MCF 10A (cell line): ENCODE measurements at regions of chr12 and their contacts with region 1.

Region 1: DNA sequence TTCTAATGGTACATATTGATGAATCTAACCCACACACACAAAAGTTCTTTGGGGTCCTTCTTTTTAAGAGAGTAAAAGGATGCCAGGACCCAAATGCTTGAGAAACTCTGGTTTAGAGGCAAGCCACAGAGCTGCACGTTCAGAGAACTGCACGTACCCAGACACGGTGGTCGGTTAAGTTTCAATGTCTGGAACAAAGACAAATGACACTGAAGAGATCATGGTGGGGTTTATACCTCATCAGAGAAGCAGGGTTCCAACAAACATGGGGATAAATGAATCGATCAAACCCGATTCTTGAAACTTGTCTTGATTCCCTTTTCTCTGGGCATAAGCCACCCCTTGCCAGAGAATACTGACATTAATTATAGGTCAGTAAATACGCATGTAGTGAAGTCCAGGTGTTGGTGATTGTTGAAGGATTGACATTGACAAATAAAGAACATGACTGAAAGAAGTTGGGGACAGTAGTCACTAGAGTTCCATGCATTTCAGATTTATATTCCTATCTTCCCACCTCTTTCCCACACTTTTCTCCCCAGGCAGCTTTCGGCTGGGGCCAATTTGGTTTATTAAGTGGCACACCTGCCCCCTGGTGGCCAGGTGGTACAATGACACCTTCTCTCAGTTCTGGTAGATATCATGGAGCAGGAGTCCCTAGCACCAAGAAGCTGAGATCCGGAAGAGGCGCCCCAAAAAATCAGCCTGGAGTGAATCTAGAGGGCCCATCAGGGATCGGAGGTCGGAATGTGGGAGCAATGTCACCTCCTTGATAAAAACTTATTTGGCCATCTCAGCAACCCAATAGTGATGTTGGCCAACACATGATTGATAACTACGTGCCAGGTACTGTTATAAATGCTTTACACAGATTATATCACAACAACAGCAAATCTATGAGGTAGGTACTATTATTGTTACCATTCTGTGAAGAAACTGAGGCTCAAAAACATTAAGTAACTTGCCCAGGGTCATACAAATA is 17.8 kb upstream of the HDAC7 start:
- DNase-seq: peak; percentile 86
- H3K4me3 Mint-ChIP-seq: no peak overlapping the region
- H3K27ac Mint-ChIP-seq: no peak overlapping the region
- H3K4me1 Mint-ChIP-seq: peaks cover 21% of the 10 kb centered on the region
- H3K27me3 Mint-ChIP-seq: no peaks in the 10 kb centered on the region
- CTCF ChIP-seq: peak; percentile 92

Region 2: DNA sequence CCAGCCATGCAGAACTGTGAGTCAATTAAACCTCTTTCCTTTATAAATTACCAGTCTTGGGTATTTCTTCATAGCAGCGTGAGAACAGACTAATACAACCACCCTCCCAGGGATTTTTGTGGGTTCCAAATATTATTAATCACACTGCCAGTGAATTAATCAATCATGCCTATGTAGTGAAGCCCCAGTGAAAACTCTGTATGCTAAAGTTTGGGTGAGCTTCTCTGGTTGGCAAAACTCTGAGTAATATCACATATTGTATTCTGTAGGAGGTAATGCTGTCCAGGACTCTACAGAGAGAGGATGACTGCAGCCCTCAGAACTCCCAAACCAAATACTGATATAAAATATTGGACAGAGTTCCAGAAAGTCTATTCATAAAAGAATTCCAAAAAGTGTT is 348.6 kb before region 1 on chr12:
- CTCF ChIA-PET with region 1: no interaction called
- POLR2A ChIA-PET with region 1: no interaction called
- intact Hi-C with region 1: no loop called
- DNase-seq: no peak
- H3K4me3 Mint-ChIP-seq: no peak overlapping the region
- H3K27ac Mint-ChIP-seq: no peak overlapping the region
- H3K4me1 Mint-ChIP-seq: no peaks in the 10 kb centered on the region
- H3K27me3 Mint-ChIP-seq: peaks cover 94% of the 10 kb centered on the region
- CTCF ChIP-seq: no peak

Region 3: GRCh38 chr12:47591361-47591791 is 246.1 kb before region 1 on chr12:
- CTCF ChIA-PET with region 1: no interaction called
- POLR2A ChIA-PET with region 1: no interaction called
- intact Hi-C with region 1: no loop called
- DNase-seq: no peak
- H3K4me3 Mint-ChIP-seq: no peak overlapping the region
- H3K27ac Mint-ChIP-seq: no peak overlapping the region
- H3K4me1 Mint-ChIP-seq: no peaks in the 10 kb centered on the region
- H3K27me3 Mint-ChIP-seq: no peaks in the 10 kb centered on the region
- CTCF ChIP-seq: no peak

Region 4: GRCh38 chr12:47651368-47652254 is 185.9 kb before region 1 on chr12:
- CTCF ChIA-PET with region 1: interaction called, 11 read pairs
- POLR2A ChIA-PET with region 1: no interaction called
- intact Hi-C with region 1: loop called (anchors 2 kb)
- DNase-seq: peak; percentile 79
- H3K4me3 Mint-ChIP-seq: peak overlapping the region; percentile 21
- H3K27ac Mint-ChIP-seq: no peak overlapping the region
- H3K4me1 Mint-ChIP-seq: no peaks in the 10 kb centered on the region
- H3K27me3 Mint-ChIP-seq: no peaks in the 10 kb centered on the region
- CTCF ChIP-seq: peak; percentile 64

Region 5: DNA sequence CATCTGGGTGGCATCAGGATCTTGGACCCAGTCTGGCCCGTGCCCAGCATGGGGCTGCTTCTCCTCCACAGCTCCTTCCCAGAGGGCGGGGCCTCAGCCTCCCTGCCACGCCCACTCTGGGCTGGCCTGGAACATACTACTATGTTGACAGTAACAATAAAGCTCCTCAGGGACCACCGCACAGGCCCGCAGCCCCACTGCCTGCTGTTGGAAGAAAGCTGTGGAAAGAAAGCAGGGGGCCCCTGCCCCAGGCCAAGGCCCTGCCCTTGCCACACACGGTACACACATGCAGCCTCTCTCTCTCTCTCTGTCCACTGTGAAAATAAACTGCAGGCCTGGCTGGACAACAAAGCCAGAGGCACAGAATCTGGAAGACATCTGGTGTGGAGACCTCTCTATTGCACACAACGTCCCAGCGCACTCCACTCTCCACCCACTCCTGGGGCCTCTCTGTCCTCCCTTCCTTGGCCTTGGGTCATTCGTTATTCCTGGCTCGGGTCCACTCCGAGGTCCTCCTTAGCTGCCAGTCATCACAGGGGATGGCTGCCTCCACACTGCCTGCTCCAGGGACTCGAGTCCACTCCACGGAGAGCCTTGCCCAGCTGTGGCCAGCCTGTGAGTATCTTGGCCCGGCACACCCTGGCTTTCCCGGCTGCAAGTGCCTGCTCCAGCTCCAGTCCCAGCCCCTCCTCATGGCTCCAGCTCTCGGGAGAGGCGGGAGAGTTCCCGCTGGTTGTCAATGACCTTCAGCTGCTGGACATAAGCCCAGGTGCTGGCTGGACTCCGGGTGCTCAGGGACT is 100.4 kb before region 1 on chr12:
- CTCF ChIA-PET with region 1: interaction called, 376 read pairs
- POLR2A ChIA-PET with region 1: interaction called, 35 read pairs
- intact Hi-C with region 1: loop called (anchors 1 kb)
- DNase-seq: peak; percentile 59
- H3K4me3 Mint-ChIP-seq: no peak overlapping the region
- H3K27ac Mint-ChIP-seq: no peak overlapping the region
- H3K4me1 Mint-ChIP-seq: peaks cover 14% of the 10 kb centered on the region
- H3K27me3 Mint-ChIP-seq: no peaks in the 10 kb centered on the region
- CTCF ChIP-seq: no peak

Region 6: GRCh38 chr12:47779301-47779942 is 58.1 kb before region 1 on chr12:
- CTCF ChIA-PET with region 1: interaction called, 622 read pairs
- POLR2A ChIA-PET with region 1: interaction called, 29 read pairs
- intact Hi-C with region 1: loop called (anchors 1 kb)
- DNase-seq: peak; percentile 88
- H3K4me3 Mint-ChIP-seq: no peak overlapping the region
- H3K27ac Mint-ChIP-seq: no peak overlapping the region
- H3K4me1 Mint-ChIP-seq: peaks cover 30% of the 10 kb centered on the region
- H3K27me3 Mint-ChIP-seq: no peaks in the 10 kb centered on the region
- CTCF ChIP-seq: peak; percentile 89

Region 7: GRCh38 chr12:47812797-47813510 is 24.5 kb before region 1 on chr12:
- CTCF ChIA-PET with region 1: interaction called, 47 read pairs
- POLR2A ChIA-PET with region 1: interaction called, 110 read pairs
- intact Hi-C with region 1: no loop called
- DNase-seq: peak; percentile 85
- H3K4me3 Mint-ChIP-seq: peak overlapping the region; percentile 68
- H3K27ac Mint-ChIP-seq: peak overlapping the region; percentile 85
- H3K4me1 Mint-ChIP-seq: peaks cover 75% of the 10 kb centered on the region
- H3K27me3 Mint-ChIP-seq: no peaks in the 10 kb centered on the region
- CTCF ChIP-seq: no peak

Region 8: GRCh38 chr12:47850153-47851084 is 12.9 kb after region 1 on chr12:
- CTCF ChIA-PET with region 1: interaction called, 35 read pairs
- POLR2A ChIA-PET with region 1: interaction called, 3 read pairs
- intact Hi-C with region 1: no loop called
- DNase-seq: no peak
- H3K4me3 Mint-ChIP-seq: no peak overlapping the region
- H3K27ac Mint-ChIP-seq: no peak overlapping the region
- H3K4me1 Mint-ChIP-seq: peaks cover 6% of the 10 kb centered on the region
- H3K27me3 Mint-ChIP-seq: no peaks in the 10 kb centered on the region
- CTCF ChIP-seq: no peak

Region 9: DNA sequence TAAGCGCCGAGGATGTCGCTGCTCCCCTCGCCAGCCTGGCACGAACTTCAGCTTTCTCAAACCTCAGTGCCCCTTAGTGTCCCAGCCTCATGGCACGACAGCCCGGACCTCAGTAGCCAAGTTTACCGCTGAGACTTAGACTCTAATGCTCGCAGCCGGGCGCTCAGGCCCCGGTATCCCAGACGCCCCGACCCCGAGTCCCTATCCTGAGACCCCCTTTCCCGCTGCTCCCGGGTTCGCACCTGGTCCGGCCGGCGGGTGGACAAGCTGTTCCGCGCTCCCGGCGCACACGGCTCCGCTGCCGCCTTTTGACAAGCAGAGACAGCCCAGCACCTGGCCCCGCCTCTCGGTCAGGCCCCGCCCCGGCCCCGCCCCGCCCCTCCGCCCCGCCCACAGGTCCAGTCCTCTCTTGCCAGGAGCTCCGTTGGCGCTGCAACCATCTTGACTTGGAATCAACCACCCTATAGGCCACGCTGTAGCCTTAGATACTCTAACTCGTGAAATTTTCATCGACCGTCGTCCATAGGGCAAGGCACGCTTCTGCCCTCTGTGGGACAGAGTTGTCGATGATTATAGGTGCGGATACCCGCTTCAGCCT is 67.3 kb after region 1 on chr12 and contains the start of gene VDR:
- CTCF ChIA-PET with region 1: interaction called, 11 read pairs
- POLR2A ChIA-PET with region 1: interaction called, 8 read pairs
- intact Hi-C with region 1: no loop called
- DNase-seq: peak; percentile 90
- H3K4me3 Mint-ChIP-seq: peak within 1 kb of the TSS; percentile 93
- H3K27ac Mint-ChIP-seq: peak within 1 kb of the TSS; percentile 82
- H3K4me1 Mint-ChIP-seq: peaks cover 37% of the 10 kb centered on the region
- H3K27me3 Mint-ChIP-seq: no peaks in the 10 kb centered on the region
- CTCF ChIP-seq: no peak
- total RNA-seq, gene VDR: 22.3 and 23.4 TPM in 2 replicates